ENCODE measurements at regions of chr20 and their contacts with region 1.

Region 1: GRCh38 chr20:3312940-3313682 is 74.1 kb upstream of the SLC4A11 start:
- DNase-seq: no peak
- H3K4me3 ChIP-seq: no peak overlapping the region
- H3K27ac ChIP-seq: peak overlapping the region in 56 of 59 donors; percentile 0 to 87 (median 74)
- H3K27me3 ChIP-seq: no peaks in the 10 kb centered on the region
- CTCF ChIP-seq: no peak

Region 2: DNA sequence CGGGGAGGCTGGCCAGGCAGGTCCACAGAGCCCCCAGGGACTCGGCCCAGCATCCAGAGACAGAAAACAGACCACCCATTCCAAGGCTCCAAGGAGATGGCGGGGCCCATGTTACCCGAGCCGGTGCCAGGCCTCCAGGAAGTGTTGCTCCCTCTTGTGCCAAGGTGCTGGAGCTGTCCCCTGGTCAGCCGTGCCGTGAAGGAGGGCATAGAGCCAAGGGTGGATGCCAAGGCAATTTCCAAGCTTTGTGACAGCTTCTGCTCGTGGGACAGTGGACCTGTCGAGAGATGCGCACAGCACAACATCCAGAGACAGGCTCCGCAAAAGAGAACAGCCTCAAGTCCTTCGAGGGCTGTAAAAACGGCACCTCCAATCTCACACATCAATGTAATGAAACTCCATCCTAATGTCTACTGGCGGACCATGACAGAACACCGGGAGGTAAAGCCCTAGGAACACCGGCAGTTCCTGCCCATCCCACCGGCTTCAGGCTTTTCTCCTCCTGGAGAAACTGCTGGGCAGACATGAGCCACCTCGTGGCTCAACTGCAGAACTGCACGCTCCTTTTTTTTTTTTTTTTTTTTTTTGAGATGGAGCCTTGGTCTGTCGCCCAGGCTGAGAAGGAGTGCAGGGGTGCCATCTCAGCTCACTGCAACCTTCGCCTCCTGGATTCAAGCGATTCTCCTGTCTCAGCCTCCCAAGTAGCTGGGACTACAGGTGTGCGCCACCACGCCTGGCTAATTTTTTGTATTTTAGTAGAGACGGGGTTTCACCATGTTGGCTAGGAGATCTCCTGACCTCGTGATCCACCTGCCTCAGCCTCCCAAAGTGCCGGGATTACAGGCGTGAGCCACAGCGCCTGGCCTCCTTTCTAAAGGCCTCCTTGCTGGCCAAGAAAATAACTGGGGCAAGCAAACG is 197.7 kb before region 1 on chr20:
- intact Hi-C with region 1: loop called in 1 of 2 experiments (anchors 5 kb)
- DNase-seq: peak in 2 of 10 donors; percentile 41 to 65
- H3K4me3 ChIP-seq: peak overlapping the region in 11 of 59 donors; percentile 2 to 34 (median 18)
- H3K27ac ChIP-seq: peak overlapping the region in 13 of 59 donors; percentile 6 to 60 (median 28)
- H3K27me3 ChIP-seq: no peaks in the 10 kb centered on the region
- CTCF ChIP-seq: peak; percentile 67 to 96 (median 79)

Region 3: GRCh38 chr20:3173610-3174441 is 139.3 kb before region 1 on chr20:
- intact Hi-C with region 1: no loop called
- DNase-seq: peak; percentile 71 to 93 (median 87)
- H3K4me3 ChIP-seq: peak overlapping the region; percentile 68 to 100 (median 93)
- H3K27ac ChIP-seq: peak overlapping the region in 58 of 59 donors; percentile 5 to 96 (median 84)
- H3K27me3 ChIP-seq: no peaks in the 10 kb centered on the region
- CTCF ChIP-seq: peak in 3 of 56 donors; percentile 1 to 15 (median 8)

Region 4: DNA sequence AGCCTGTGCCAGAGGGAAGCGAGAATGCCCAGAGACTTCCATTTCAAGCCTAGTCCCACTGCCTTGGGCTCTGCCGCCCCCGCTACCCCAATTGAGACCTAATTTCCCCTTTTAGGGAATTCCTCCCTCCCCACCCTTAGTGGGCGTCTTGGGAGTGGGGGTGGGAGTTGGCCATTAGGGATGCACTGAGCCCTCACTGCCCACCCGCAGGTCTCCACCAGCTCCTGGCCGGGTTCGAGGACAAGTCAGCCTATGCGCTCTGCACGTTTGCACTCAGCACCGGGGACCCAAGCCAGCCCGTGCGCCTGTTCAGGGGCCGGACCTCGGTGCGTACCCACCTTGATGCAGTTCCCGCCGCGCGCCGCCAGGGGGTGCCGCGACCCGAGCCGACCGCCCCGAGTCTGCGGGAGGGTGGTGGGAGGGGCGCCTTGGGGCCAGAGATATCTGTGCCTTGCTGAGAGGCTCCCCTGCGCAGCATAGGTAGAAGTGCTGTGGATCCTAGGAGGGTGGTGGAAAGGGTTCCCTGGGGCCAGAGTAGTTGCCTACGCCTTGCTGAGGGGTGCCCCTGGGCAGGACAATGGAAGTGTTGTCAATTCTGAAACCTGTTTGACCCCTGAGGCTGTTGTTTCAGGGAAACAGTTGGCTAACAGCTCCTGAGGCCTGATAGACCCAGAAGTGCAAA is 94.7 kb before region 1 on chr20:
- intact Hi-C with region 1: loop called in 1 of 2 experiments (anchors 5 kb)
- DNase-seq: peak in 5 of 10 donors; percentile 29 to 76 (median 46)
- H3K4me3 ChIP-seq: peak overlapping the region in 34 of 59 donors; percentile 1 to 51 (median 26)
- H3K27ac ChIP-seq: peak overlapping the region in 2 of 59 donors; percentile 2 to 13
- H3K27me3 ChIP-seq: no peaks in the 10 kb centered on the region
- CTCF ChIP-seq: peak; percentile 69 to 97 (median 92)

Region 5: DNA sequence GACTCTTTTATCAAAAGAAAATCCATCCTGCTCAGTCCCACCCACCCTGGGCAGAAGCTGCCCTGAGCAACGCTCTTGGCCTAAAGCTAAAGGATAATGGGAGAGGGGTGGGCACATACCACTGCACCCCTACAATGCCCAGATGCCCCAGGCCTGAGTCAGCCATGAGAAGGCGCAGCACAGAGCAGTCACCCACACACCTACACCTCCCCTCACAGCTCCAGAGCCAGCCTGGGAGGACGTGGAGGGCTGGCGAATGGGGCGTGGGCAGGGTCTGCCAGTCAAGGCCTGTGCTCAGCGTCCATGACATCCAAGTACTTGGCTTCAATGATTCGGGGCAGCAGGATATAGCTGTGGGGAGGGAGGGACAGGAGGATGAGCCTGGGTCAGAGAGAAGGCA is 85.6 kb before region 1 on chr20:
- intact Hi-C with region 1: loop called in 1 of 2 experiments (anchors 5 kb)
- DNase-seq: no peak
- H3K4me3 ChIP-seq: no peak overlapping the region
- H3K27ac ChIP-seq: peak overlapping the region in 1 of 59 donors; percentile 34
- H3K27me3 ChIP-seq: no peaks in the 10 kb centered on the region
- CTCF ChIP-seq: no peak

Region 6: DNA sequence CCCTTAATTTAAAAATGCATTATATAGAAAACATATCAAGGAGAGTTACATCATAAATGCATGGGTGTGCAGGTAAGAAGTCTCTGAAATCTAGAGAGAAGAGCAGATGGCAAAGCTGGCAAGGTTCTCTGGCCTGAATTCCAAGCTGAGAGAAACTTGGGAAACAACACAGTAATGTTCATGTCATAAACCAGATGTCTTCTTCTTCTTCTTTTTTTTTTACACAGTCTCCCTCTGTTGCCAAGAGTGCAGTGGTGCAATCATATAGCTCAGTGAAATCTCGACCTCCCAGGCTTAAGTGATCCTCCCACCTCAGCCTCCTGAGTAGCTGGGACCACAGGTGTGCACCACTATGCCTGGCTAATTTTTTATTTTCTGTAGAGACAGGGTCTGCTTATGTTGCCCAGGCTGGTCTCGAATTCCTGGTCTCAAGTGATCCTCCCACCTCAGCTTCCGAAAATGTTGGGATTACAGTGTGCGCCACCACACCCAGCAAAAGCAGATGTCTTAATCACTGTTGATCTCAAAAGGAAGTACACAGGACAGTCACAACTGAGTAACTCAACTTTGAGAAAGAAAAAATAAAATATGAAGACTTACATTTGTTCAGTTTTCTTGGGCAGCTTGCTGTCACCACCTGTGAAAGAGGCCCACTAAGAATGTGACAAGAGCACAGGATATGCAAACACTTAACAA is 17.1 kb after region 1 on chr20:
- intact Hi-C with region 1: no loop called
- DNase-seq: peak in 2 of 10 donors; percentile 41 to 47
- H3K4me3 ChIP-seq: no peak overlapping the region
- H3K27ac ChIP-seq: peak overlapping the region in 39 of 59 donors; percentile 0 to 82 (median 52)
- H3K27me3 ChIP-seq: no peaks in the 10 kb centered on the region
- CTCF ChIP-seq: peak in 9 of 56 donors; percentile 9 to 23 (median 16)

Region 7: GRCh38 chr20:3612795-3613572 is 299.9 kb after region 1 on chr20:
- intact Hi-C with region 1: no loop called
- DNase-seq: no peak
- H3K4me3 ChIP-seq: no peak overlapping the region
- H3K27ac ChIP-seq: peak overlapping the region in 2 of 59 donors; percentile 9 to 38
- H3K27me3 ChIP-seq: no peaks in the 10 kb centered on the region
- CTCF ChIP-seq: peak in 1 of 56 donors; percentile 11